ENCODE measurements at regions of chr2 and their contacts with region 1.

Region 1: DNA sequence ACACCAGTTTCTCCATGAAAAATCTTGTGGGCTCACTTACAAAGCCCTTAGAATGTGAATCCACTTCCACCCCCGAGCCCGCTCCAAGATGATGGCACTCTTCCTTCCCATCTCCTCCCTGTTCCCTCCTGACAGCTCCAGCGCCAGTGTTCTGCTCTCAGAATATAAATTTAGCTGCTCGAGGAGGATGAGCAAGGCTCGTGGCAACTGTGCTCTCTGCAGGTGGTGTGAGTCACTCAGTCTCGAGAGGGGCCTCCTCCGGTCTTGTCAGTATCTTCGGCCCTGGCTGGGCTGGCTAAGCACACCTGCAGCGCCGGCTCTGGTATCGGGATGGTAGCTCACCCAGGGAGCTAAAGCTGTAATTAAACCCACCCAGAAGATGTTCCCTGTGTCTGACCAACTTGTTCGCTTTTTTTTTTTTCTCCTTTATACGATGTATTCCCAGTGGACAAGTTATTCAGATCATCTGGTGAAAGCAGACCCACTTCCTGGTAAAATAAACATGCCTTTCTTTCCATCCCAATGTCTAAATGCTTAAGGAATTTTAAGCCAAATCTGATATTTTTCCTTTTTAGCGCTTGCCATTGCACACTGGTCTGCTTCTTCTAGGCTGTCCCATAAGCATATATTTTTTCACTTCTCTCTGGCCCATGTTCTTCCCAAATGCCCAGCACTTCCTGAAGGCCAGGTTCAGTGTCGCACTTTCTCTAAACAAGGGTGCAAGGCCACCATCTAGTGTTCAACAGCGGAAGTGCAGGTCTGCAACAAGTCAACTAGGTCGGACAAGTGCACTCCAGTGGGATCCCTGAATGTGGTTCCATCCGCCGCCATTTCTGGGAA is 31.4 kb upstream of the YPEL5 start:
- DNase-seq: peak; percentile 72
- H3K4me3 ChIP-seq: no peak overlapping the region
- H3K27ac ChIP-seq: peak overlapping the region in 1 of 2 donors; percentile 26
- H3K4me1 ChIP-seq: no peaks in the 10 kb centered on the region
- H3K27me3 ChIP-seq: no peaks in the 10 kb centered on the region
- CTCF ChIP-seq: peak; percentile 81 to 93 (median 86)
- POLR2A ChIP-seq: no peak

Region 2: GRCh38 chr2:29834624-29835023 is 280.7 kb before region 1 on chr2:
- intact Hi-C with region 1: no loop called
- DNase-seq: no peak
- H3K4me3 ChIP-seq: no peak overlapping the region
- H3K27ac ChIP-seq: no peak overlapping the region
- H3K4me1 ChIP-seq: no peaks in the 10 kb centered on the region
- H3K27me3 ChIP-seq: no peaks in the 10 kb centered on the region
- CTCF ChIP-seq: no peak
- POLR2A ChIP-seq: no peak

Region 3: GRCh38 chr2:29977284-29977683 is 138.1 kb before region 1 on chr2:
- intact Hi-C with region 1: no loop called
- DNase-seq: no peak
- H3K4me3 ChIP-seq: no peak overlapping the region
- H3K27ac ChIP-seq: no peak overlapping the region
- H3K4me1 ChIP-seq: no peaks in the 10 kb centered on the region
- H3K27me3 ChIP-seq: no peaks in the 10 kb centered on the region
- CTCF ChIP-seq: no peak
- POLR2A ChIP-seq: no peak

Region 4: GRCh38 chr2:30072250-30072842 is 43.0 kb before region 1 on chr2:
- intact Hi-C with region 1: no loop called
- DNase-seq: peak; percentile 49
- H3K4me3 ChIP-seq: no peak overlapping the region
- H3K27ac ChIP-seq: no peak overlapping the region
- H3K4me1 ChIP-seq: no peaks in the 10 kb centered on the region
- H3K27me3 ChIP-seq: no peaks in the 10 kb centered on the region
- CTCF ChIP-seq: peak in 3 of 4 experiments; percentile 43 to 58 (median 54)
- POLR2A ChIP-seq: no peak

Region 5: DNA sequence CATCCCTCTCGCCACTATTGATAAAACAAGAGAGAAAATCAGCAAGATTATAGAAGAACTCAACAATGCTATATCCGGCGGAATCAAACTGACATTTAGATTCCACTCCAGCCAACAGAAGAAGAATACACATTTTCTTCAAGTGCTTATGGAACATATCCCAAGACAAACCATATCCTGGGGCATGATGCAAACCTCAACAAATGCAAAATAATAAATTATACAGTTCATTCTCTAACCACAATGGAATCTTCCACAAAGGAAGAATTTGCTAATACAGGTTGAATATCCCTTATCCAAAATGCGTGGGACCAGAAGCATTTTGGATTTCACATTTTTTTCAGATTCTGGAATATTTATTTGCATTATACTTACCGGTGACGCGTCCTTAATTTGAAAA is 20.0 kb before region 1 on chr2:
- intact Hi-C with region 1: loop called (anchors 2 kb)
- DNase-seq: no peak
- H3K4me3 ChIP-seq: no peak overlapping the region
- H3K27ac ChIP-seq: no peak overlapping the region
- H3K4me1 ChIP-seq: no peaks in the 10 kb centered on the region
- H3K27me3 ChIP-seq: no peaks in the 10 kb centered on the region
- CTCF ChIP-seq: no peak
- POLR2A ChIP-seq: no peak

Region 6: GRCh38 chr2:30178618-30179434 is 63.5 kb after region 1 on chr2:
- intact Hi-C with region 1: no loop called
- DNase-seq: no peak
- H3K4me3 ChIP-seq: no peak overlapping the region
- H3K27ac ChIP-seq: no peak overlapping the region
- H3K4me1 ChIP-seq: no peaks in the 10 kb centered on the region
- H3K27me3 ChIP-seq: no peaks in the 10 kb centered on the region
- CTCF ChIP-seq: no peak
- POLR2A ChIP-seq: no peak